ENCODE measurements at regions of chr19 and their contacts with region 1.

Region 1: GRCh38 chr19:23033721-23034120 is 30.7 kb upstream of the ZNF728 start:
- DNase-seq: no peak
- H3K4me3 ChIP-seq: no peak overlapping the region
- H3K27ac ChIP-seq: no peak overlapping the region
- H3K4me1 ChIP-seq: no peaks in the 10 kb centered on the region
- H3K27me3 ChIP-seq: no peaks in the 10 kb centered on the region
- CTCF ChIP-seq: no peak
- EP300 ChIP-seq: no peak
- POLR2A ChIP-seq: no peak

Region 2: GRCh38 chr19:21970466-21970865 is 1063.3 kb before region 1 on chr19:
- intact Hi-C with region 1: loop called in 1 of 4 experiments (anchors 10 kb)
- DNase-seq: no peak
- H3K4me3 ChIP-seq: no peak overlapping the region
- H3K27ac ChIP-seq: no peak overlapping the region
- H3K4me1 ChIP-seq: no peaks in the 10 kb centered on the region
- H3K27me3 ChIP-seq: no peaks in the 10 kb centered on the region
- CTCF ChIP-seq: no peak
- EP300 ChIP-seq: no peak
- POLR2A ChIP-seq: no peak

Region 3: DNA sequence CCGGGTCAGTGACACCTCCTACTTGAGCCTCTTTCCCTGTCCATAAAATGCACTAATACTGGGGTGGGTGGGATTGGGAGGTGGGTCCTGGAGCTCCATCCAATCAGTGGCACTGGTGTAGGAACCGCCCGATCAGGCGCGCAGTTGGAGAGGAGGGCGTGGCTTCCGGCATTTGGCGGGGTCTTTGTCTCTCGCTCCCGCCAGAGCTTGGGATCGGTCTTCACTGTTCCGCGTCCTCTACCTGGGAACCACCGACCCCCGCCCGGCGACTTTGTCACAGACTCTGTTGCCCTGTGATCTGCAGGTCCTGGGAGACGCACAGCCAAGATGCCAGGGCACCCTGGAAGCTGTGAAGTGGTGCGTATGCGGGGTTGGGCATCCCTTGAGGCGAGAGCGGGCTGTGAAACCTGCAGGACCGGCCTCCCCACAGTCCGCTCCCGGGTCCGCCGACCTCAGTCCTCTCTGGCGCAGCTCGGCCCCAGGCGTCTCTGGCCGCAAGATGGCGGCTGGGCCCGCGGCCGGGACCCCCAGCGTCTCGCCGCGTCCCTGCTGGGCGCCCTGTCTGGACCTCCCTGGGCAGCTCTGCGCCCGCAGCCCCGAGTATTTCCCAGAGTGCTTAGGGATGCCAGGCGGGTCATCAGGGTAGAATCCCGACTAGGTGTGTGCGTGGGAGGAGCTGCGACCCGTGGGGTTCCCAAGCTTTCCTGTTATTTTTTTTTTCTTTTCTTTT is 41.5 kb after region 1 on chr19:
- intact Hi-C with region 1: no loop called
- DNase-seq: peak; percentile 56 to 81 (median 72)
- H3K4me3 ChIP-seq: peak overlapping the region; percentile 52
- H3K27ac ChIP-seq: no peak overlapping the region
- H3K4me1 ChIP-seq: peaks cover 3% of the 10 kb centered on the region
- H3K27me3 ChIP-seq: no peaks in the 10 kb centered on the region
- CTCF ChIP-seq: no peak
- EP300 ChIP-seq: no peak
- POLR2A ChIP-seq: no peak